ENCODE measurements at regions of chr12 and their contacts with region 1.

Region 1: DNA sequence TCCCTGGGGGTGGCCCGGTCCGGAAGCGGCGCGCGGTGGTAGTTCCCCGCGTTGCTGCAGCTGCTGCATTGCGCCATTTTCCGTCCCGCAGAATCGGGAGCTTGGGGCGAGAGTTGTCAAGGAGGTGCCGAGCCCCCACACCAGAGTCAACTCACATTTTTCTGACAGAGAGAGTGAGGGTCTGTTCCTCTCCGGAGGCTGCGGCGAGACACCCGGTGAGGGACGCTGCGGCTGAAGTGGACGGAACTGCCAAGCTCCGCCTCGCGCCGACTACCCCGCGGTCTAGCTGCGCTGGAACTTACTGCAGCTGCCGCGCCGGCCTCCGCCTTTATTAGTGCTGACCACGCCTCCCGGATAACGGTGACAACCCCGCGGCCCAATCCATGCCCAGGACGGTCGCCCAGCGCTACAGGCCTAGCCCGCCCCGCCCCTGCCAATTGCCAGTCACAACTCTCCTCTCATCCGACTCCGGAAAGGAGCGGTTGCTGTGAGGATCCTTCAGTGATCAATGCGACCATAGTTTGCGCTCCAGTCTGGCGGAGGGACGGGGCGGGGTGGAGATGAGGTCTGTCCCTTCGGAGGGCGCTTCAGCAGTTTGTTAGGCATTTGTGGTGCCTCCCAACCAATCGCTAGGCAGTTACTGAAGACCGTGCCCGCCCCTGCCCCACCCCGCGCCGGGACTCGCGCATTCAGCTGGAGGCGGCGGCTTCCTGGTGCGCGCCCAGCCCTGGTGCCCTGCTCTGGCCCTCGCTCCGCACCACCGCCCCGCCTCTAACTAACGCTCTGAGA is at the start of gene VAMP1:
- DNase-seq: peak; percentile 99
- ATAC-seq: peak; percentile 89
- H3K4me3 Mint-ChIP-seq: peak within 1 kb of the TSS; percentile 87
- H3K27ac Mint-ChIP-seq: peak within 1 kb of the TSS; percentile 94
- H3K4me1 Mint-ChIP-seq: peaks cover 53% of the 10 kb centered on the region
- H3K27me3 Mint-ChIP-seq: peaks cover 8% of the 10 kb centered on the region
- total RNA-seq, gene VAMP1: 49.2 to 59.1 TPM

Region 2: GRCh38 chr12:6323340-6323994 is 147.1 kb before region 1 on chr12:
- CTCF ChIA-PET with region 1: interaction called, 14 read pairs
- DNase-seq: peak; percentile 65
- ATAC-seq: peak; percentile 83
- H3K4me3 Mint-ChIP-seq: peak overlapping the region; percentile 56
- H3K27ac Mint-ChIP-seq: peak overlapping the region; percentile 92
- H3K4me1 Mint-ChIP-seq: peaks cover 43% of the 10 kb centered on the region
- H3K27me3 Mint-ChIP-seq: no peaks in the 10 kb centered on the region

Region 3: DNA sequence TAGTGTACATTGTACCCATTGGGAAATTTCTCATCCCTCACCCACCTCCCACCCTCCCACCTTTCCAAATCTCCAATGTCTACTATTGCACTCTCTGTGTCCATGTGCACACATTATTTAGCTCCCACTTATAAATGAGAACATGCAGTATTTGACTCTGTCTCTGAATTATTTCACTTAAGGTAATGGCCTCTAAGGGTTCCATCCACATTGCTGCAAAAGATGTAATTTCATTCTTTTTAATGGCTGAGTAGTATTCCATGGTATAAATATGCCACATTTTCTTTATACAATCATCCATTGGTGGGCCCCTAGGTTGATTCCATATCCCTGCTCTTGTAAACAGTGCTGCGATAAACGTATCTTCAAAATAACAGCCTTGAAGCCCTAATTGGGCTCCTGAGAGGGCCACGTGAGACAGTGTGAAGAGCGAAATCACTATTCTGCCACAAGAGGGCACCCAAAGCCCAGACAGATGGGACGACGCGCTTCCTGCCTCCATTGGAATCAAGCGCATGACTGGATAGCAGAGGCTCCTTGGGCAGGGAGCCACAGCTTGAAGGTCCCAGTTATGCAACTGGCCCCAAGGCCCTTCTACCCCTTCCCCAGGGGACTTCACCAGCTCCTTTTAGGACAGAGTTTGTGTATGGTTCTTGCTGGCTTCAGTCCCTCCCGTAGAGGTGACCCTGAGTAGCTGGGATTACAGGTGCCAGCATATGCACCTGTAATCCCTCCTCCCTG is 47.1 kb before region 1 on chr12:
- CTCF ChIA-PET with region 1: interaction called, 171 read pairs
- DNase-seq: peak; percentile 88
- ATAC-seq: peak; percentile 76
- H3K4me3 Mint-ChIP-seq: no peak overlapping the region
- H3K27ac Mint-ChIP-seq: peak overlapping the region; percentile 66
- H3K4me1 Mint-ChIP-seq: peaks cover 46% of the 10 kb centered on the region
- H3K27me3 Mint-ChIP-seq: peaks cover 3% of the 10 kb centered on the region

Region 4: GRCh38 chr12:6443361-6443983 is 27.1 kb before region 1 on chr12:
- CTCF ChIA-PET with region 1: interaction called, 24 read pairs
- DNase-seq: peak; percentile 67
- ATAC-seq: peak; percentile 50
- H3K4me3 Mint-ChIP-seq: peak overlapping the region; percentile 80
- H3K27ac Mint-ChIP-seq: peak overlapping the region; percentile 87
- H3K4me1 Mint-ChIP-seq: peaks cover 66% of the 10 kb centered on the region
- H3K27me3 Mint-ChIP-seq: no peaks in the 10 kb centered on the region

Region 5: GRCh38 chr12:6540181-6540877 is 69.8 kb after region 1 on chr12:
- CTCF ChIA-PET with region 1: interaction called, 19 read pairs
- DNase-seq: peak; percentile 64
- ATAC-seq: peak; percentile 28
- H3K4me3 Mint-ChIP-seq: peak overlapping the region; percentile 26
- H3K27ac Mint-ChIP-seq: peak overlapping the region; percentile 99
- H3K4me1 Mint-ChIP-seq: peaks cover 54% of the 10 kb centered on the region
- H3K27me3 Mint-ChIP-seq: no peaks in the 10 kb centered on the region